ENCODE measurements at regions of chr2 and their contacts with region 1.

Region 1: GRCh38 chr2:102251042-102251848 is 60.1 kb upstream of the IL1RL1 start:
- DNase-seq: peak; percentile 46
- H3K4me3 ChIP-seq: peak overlapping the region; percentile 37
- H3K27ac ChIP-seq: no peak overlapping the region
- H3K4me1 ChIP-seq: no peaks in the 10 kb centered on the region
- H3K27me3 ChIP-seq: peaks cover 31% of the 10 kb centered on the region
- CTCF ChIP-seq: peak; percentile 64

Region 2: DNA sequence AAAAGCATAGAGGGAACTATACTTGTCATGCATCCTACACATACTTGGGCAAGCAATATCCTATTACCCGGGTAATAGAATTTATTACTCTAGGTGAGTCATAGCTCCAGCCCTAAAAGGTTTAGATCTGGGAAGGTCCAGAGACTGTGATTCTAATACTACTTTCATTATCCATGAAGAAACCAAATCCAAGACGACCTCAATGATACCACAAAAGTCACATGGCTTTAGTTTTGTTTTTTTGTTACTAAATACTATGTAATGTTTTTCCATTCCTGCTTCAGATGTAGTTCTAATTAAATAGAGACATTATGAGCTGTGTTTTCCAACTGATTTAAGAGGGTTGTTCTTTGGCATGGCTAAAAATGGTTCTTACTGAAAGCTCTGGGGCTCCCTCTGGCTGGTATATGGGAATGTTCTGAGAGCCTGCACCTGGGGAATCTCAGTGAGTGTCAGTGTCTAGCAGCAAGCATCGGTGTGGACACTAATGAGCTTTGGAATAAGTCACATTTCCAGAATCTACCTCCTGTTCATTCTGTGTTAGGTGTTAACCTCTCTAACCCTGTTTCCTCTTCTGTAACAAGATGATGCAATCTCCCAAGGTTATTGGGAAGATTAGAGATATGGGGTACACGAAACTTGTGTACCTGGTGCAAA is 84.9 kb before region 1 on chr2:
- CTCF ChIA-PET with region 1: no interaction called
- POLR2A ChIA-PET with region 1: no interaction called
- intact Hi-C with region 1: no loop called
- DNase-seq: peak; percentile 8
- H3K4me3 ChIP-seq: no peak overlapping the region
- H3K27ac ChIP-seq: no peak overlapping the region
- H3K4me1 ChIP-seq: no peaks in the 10 kb centered on the region
- H3K27me3 ChIP-seq: no peaks in the 10 kb centered on the region
- CTCF ChIP-seq: peak; percentile 43; the same call in 1 of the 2 replicates

Region 3: GRCh38 chr2:102301867-102302362 is 50.7 kb after region 1 on chr2:
- CTCF ChIA-PET with region 1: no interaction called
- POLR2A ChIA-PET with region 1: no interaction called
- intact Hi-C with region 1: loop called (anchors 5 kb)
- DNase-seq: peak; percentile 14
- H3K4me3 ChIP-seq: no peak overlapping the region
- H3K27ac ChIP-seq: no peak overlapping the region
- H3K4me1 ChIP-seq: no peaks in the 10 kb centered on the region
- H3K27me3 ChIP-seq: peaks cover 62% of the 10 kb centered on the region
- CTCF ChIP-seq: peak; percentile 52

Region 4: GRCh38 chr2:102442967-102443828 is 192.0 kb after region 1 on chr2:
- CTCF ChIA-PET with region 1: no interaction called
- POLR2A ChIA-PET with region 1: no interaction called
- intact Hi-C with region 1: loop called (anchors 5 kb)
- DNase-seq: peak; percentile 25
- H3K4me3 ChIP-seq: no peak overlapping the region
- H3K27ac ChIP-seq: no peak overlapping the region
- H3K4me1 ChIP-seq: no peaks in the 10 kb centered on the region
- H3K27me3 ChIP-seq: peaks cover 28% of the 10 kb centered on the region
- CTCF ChIP-seq: peak; percentile 71